ENCODE measurements at regions of chr3 and their contacts with region 1.

Region 1: DNA sequence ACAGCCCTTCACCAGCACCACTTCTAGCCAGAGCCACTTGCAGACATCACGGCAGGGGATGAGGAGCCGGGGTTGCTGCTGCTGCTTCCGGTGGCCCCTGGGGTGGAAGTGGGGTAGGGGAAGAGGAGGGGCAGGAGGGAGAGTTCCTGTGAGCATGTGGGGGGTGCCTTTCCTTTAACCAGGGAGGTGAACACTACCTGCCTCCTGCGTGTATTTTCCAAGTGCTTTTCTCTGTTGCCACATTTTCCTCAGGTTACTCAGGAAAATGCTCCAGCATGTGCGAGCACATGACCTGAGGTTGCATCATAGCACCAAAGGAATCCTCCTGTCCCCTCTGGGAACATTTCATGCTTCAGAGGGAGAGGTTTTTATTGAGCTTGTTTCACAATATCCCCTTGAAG is 12.2 kb upstream of the SACM1L start:
- DNase-seq: no peak
- H3K4me3 ChIP-seq: no peak overlapping the region
- H3K27ac ChIP-seq: no peak overlapping the region
- H3K4me1 ChIP-seq: peaks cover 8 to 19% (median 13%) of the 10 kb centered on the region in 4 experiments
- H3K27me3 ChIP-seq: no peaks in the 10 kb centered on the region
- CTCF ChIP-seq: no peak
- EP300 ChIP-seq: no peak
- POLR2A ChIP-seq: no peak
- RAD21 ChIP-seq: no peak

Region 2: DNA sequence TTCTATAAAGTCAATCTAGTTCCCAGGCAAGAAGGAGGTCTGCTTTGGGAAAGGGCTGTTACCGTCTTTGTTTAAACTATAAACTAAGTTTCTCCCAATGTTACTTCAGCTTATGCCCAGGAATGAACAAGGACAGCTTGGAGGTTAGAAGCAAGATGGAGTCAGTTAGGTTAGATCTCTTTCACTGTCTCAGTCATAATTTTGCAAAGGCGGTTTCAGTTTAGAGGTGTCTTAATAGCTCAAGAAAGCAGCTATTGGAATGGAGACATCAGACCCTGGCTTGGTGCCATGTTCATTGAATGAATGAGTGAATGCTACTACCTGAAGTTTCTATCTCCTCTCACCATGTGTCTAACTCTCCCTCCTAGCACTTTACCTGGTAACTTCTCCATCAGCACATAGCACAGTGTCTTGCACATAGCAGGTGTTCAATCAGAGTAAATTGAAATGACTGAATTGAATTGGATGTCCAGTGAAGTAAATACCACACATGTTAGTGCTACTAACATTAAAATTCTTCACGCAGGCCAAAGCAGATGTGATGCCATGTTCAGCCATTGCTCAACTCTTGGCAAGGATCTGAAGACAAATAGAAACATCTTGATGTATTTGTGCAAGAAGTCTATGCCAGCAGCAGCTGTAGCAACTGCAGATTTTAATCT is 622.7 kb before region 1 on chr3:
- CTCF ChIA-PET with region 1: no interaction called
- POLR2A ChIA-PET with region 1: no interaction called
- DNase-seq: no peak
- H3K4me3 ChIP-seq: no peak overlapping the region
- H3K27ac ChIP-seq: no peak overlapping the region
- H3K4me1 ChIP-seq: peaks cover 0 to 2% (median 1%) of the 10 kb centered on the region in 4 experiments; a peak in 4 of 7 replicates
- H3K27me3 ChIP-seq: peaks cover 10 to 38% (median 35%) of the 10 kb centered on the region in 4 experiments
- CTCF ChIP-seq: no peak
- EP300 ChIP-seq: no peak
- POLR2A ChIP-seq: no peak
- RAD21 ChIP-seq: no peak

Region 3: GRCh38 chr3:45665101-45665572 is 11.9 kb before region 1 on chr3:
- CTCF ChIA-PET with region 1: interaction called, 29 read pairs
- POLR2A ChIA-PET with region 1: interaction called, 5 read pairs
- DNase-seq: no peak
- H3K4me3 ChIP-seq: no peak overlapping the region
- H3K27ac ChIP-seq: no peak overlapping the region
- H3K4me1 ChIP-seq: no peaks in the 10 kb centered on the region
- H3K27me3 ChIP-seq: no peaks in the 10 kb centered on the region
- CTCF ChIP-seq: peak; percentile 94 to 99 (median 99)
- EP300 ChIP-seq: no peak
- POLR2A ChIP-seq: no peak
- RAD21 ChIP-seq: peak; percentile 69 to 79

Region 4: GRCh38 chr3:45701172-45701867 is 24.3 kb after region 1 on chr3:
- CTCF ChIA-PET with region 1: no interaction called
- POLR2A ChIA-PET with region 1: interaction called, 14 read pairs
- DNase-seq: peak in 1 of 2 experiments; percentile 27
- H3K4me3 ChIP-seq: peak overlapping the region in 1 of 4 experiments; percentile 43; a peak in 2 of 8 replicates
- H3K27ac ChIP-seq: peak overlapping the region; percentile 36; the same call in 1 of the 2 replicates
- H3K4me1 ChIP-seq: peaks cover 2 to 22% (median 12%) of the 10 kb centered on the region in 4 experiments
- H3K27me3 ChIP-seq: no peaks in the 10 kb centered on the region
- CTCF ChIP-seq: no peak
- EP300 ChIP-seq: peak in 1 of 2 experiments; percentile 78; a peak in 2 of 3 replicates
- POLR2A ChIP-seq: peak in 1 of 2 experiments; percentile 54; a peak in 1 of 3 replicates
- RAD21 ChIP-seq: no peak